ENCODE measurements at regions of chr18 and their contacts with region 1.

Region 1: GRCh38 chr18:47748847-47749599 is 181.4 kb downstream of the SMAD2 start:
- DNase-seq: peak; percentile 81
- ATAC-seq: peak; percentile 98
- H3K4me3 Mint-ChIP-seq: no peak overlapping the region
- H3K27ac Mint-ChIP-seq: no peak overlapping the region
- H3K4me1 Mint-ChIP-seq: peaks cover 3% of the 10 kb centered on the region
- H3K27me3 Mint-ChIP-seq: peaks cover 3% of the 10 kb centered on the region
- CTCF ChIP-seq: peak; percentile 100

Region 2: GRCh38 chr18:47100214-47100831 is 648.7 kb before region 1 on chr18:
- CTCF ChIA-PET with region 1: interaction called, 3 read pairs
- POLR2A ChIA-PET with region 1: no interaction called
- intact Hi-C with region 1: loop called (anchors 10 kb)
- DNase-seq: peak; percentile 70
- ATAC-seq: peak; percentile 72
- H3K4me3 Mint-ChIP-seq: no peak overlapping the region
- H3K27ac Mint-ChIP-seq: no peak overlapping the region
- H3K4me1 Mint-ChIP-seq: no peaks in the 10 kb centered on the region
- H3K27me3 Mint-ChIP-seq: no peaks in the 10 kb centered on the region
- CTCF ChIP-seq: peak; percentile 72

Region 3: GRCh38 chr18:47215554-47216138 is 533.4 kb before region 1 on chr18:
- CTCF ChIA-PET with region 1: interaction called, 32 read pairs
- POLR2A ChIA-PET with region 1: no interaction called
- intact Hi-C with region 1: no loop called
- DNase-seq: peak; percentile 36
- ATAC-seq: peak; percentile 74
- H3K4me3 Mint-ChIP-seq: no peak overlapping the region
- H3K27ac Mint-ChIP-seq: no peak overlapping the region
- H3K4me1 Mint-ChIP-seq: no peaks in the 10 kb centered on the region
- H3K27me3 Mint-ChIP-seq: peaks cover 30% of the 10 kb centered on the region
- CTCF ChIP-seq: peak; percentile 40

Region 4: GRCh38 chr18:47595815-47596496 is 153.1 kb before region 1 on chr18:
- CTCF ChIA-PET with region 1: interaction called, 13 read pairs
- POLR2A ChIA-PET with region 1: no interaction called
- intact Hi-C with region 1: loop called (anchors 5 kb)
- DNase-seq: peak; percentile 42
- ATAC-seq: no peak
- H3K4me3 Mint-ChIP-seq: no peak overlapping the region
- H3K27ac Mint-ChIP-seq: no peak overlapping the region
- H3K4me1 Mint-ChIP-seq: no peaks in the 10 kb centered on the region
- H3K27me3 Mint-ChIP-seq: peaks cover 24% of the 10 kb centered on the region
- CTCF ChIP-seq: peak; percentile 59

Region 5: GRCh38 chr18:47730795-47731194 is 18.2 kb before region 1 on chr18:
- CTCF ChIA-PET with region 1: interaction called, 11 read pairs
- POLR2A ChIA-PET with region 1: no interaction called
- intact Hi-C with region 1: no loop called
- DNase-seq: no peak
- ATAC-seq: no peak
- H3K4me3 Mint-ChIP-seq: no peak overlapping the region
- H3K27ac Mint-ChIP-seq: no peak overlapping the region
- H3K4me1 Mint-ChIP-seq: no peaks in the 10 kb centered on the region
- H3K27me3 Mint-ChIP-seq: peaks cover 4% of the 10 kb centered on the region
- CTCF ChIP-seq: no peak

Region 6: DNA sequence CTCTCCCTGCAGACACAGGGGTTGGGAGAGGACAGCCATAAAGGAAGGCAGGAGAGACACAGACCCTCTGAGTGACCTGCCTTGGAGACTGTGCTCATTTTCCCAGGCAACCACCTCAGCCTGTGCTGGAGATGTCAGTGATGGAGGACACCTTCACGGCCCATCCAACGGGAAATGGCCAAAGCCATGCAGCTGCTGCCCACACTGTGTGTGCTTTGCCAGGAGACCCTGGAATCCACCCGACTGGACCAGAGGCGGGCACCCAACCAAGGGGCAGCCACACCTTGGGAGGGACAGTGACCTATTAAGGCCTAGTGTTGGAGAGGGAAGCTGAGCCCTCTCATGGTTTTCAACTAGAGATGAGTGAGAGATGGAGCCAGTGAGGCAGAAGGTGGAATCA is 11.1 kb before region 1 on chr18:
- CTCF ChIA-PET with region 1: interaction called, 21 read pairs
- POLR2A ChIA-PET with region 1: no interaction called
- intact Hi-C with region 1: no loop called
- DNase-seq: no peak
- ATAC-seq: no peak
- H3K4me3 Mint-ChIP-seq: no peak overlapping the region
- H3K27ac Mint-ChIP-seq: no peak overlapping the region
- H3K4me1 Mint-ChIP-seq: no peaks in the 10 kb centered on the region
- H3K27me3 Mint-ChIP-seq: peaks cover 13% of the 10 kb centered on the region
- CTCF ChIP-seq: no peak